Sigmoid colon (tissue), 7 donors: ENCODE measurements at regions of chr9 and their contacts with region 1.

Region 1: DNA sequence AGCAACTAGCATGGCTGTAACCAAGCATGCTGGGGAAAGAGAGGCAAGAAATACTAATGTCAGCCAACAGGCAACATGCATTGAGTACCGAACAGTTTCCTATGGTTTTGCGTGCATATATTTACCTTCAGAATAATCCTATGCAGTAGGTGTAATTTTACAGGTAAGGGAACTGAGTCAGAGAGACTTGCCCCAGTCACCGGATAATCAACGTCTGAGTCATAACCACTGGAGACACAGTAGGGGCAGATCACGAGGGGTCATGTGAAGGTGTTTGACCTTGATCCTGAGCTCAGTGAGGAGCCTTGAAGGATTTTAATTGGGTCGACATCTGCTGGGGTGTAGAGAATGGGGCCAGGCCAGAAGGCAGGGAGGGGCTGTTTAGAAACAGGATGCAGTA is 13.4 kb upstream of the TSC1 start:
- DNase-seq: no peak
- H3K4me3 ChIP-seq: no peak overlapping the region
- H3K27ac ChIP-seq: no peak overlapping the region
- H3K4me1 ChIP-seq: no peaks in the 10 kb centered on the region
- H3K27me3 ChIP-seq: no peaks in the 10 kb centered on the region
- CTCF ChIP-seq: no peak
- EP300 ChIP-seq: no peak
- POLR2A ChIP-seq: no peak

Region 2: GRCh38 chr9:132937463-132937901 is 20.3 kb before region 1 on chr9:
- intact Hi-C with region 1: loop called (anchors 1 kb)
- DNase-seq: no peak
- H3K4me3 ChIP-seq: no peak overlapping the region
- H3K27ac ChIP-seq: no peak overlapping the region
- H3K4me1 ChIP-seq: peaks cover 0 to 7% (median 6%) of the 10 kb centered on the region in 4 donors
- H3K27me3 ChIP-seq: no peaks in the 10 kb centered on the region
- CTCF ChIP-seq: no peak
- EP300 ChIP-seq: no peak
- POLR2A ChIP-seq: no peak